Ascending aorta (tissue), 2 donors: ENCODE measurements at regions of chr1 and their contacts with region 1.

Region 1: GRCh38 chr1:9539165-9539828 is at the start of gene SLC25A33:
- DNase-seq: peak; percentile 88 to 98
- H3K4me3 ChIP-seq: peak within 1 kb of the TSS; percentile 59 to 90
- H3K27ac ChIP-seq: peak within 1 kb of the TSS; percentile 56 to 86
- H3K4me1 ChIP-seq: peaks cover 0 to 9% of the 10 kb centered on the region in 2 donors
- H3K27me3 ChIP-seq: no peaks in the 10 kb centered on the region
- CTCF ChIP-seq: peak in 1 of 3 experiments; percentile 53
- total RNA-seq, gene SLC25A33: 0.11 TPM

Region 2: DNA sequence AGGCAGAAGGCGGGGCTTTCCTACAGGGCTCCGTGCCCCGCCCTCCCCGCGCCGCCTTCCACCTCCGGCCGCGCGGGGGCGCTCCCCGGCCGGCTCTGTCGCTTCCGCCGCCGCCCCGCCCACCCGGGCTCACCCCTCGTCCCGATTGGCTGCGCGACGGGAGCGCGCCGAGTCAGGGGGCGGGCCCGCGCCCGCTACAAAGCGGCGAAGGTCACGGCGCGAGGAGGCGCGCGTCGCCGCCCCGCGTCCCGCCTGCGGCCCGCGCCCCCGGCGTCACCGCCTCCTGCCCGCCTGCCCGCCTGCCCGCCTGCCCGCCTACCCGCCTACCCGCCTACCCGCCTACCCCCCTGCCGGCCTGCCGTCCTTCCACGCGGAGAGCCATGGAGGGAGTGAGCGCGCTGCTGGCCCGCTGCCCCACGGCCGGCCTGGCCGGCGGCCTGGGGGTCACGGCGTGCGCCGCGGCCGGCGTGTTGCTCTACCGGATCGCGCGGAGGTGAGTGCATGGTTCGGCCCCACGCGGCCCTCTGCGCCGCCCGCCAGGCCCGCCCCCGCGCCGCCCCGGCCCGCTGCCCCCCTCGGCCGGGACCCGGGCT is 49.4 kb after region 1 on chr1 and contains the start of gene TMEM201:
- intact Hi-C with region 1: loop called (anchors 1 kb)
- DNase-seq: peak; percentile 56 to 96
- H3K4me3 ChIP-seq: peak within 1 kb of the TSS; percentile 77 to 91
- H3K27ac ChIP-seq: peak within 1 kb of the TSS in 1 of 2 donors; percentile 67
- H3K4me1 ChIP-seq: peaks cover 8 to 10% of the 10 kb centered on the region in 2 donors
- H3K27me3 ChIP-seq: no peaks in the 10 kb centered on the region
- CTCF ChIP-seq: peak in 2 of 3 experiments; percentile 63 to 80
- total RNA-seq, gene TMEM201: 12.8 TPM

Region 3: DNA sequence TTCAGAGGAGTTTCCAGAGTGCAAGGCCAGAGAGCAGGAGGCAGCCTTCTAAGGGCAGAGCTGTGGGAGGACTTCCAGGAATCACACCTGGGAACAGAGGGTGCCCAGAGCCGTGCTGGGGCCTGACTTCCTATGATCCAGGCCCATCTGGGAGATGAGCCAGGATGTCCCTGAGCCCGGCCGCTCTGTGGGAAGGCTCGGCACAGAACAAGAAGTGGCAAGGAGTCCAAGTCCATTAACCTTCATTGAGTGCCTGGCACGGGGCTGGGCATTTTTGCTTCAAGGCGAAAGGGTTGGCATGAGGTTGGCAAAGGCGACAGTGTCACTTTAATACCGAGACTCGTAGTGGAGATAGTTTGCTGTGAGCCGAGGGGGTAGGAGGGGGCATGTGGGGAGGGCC is 67.7 kb after region 1 on chr1:
- intact Hi-C with region 1: no loop called
- DNase-seq: no peak
- H3K4me3 ChIP-seq: no peak overlapping the region
- H3K27ac ChIP-seq: no peak overlapping the region
- H3K4me1 ChIP-seq: no peaks in the 10 kb centered on the region
- H3K27me3 ChIP-seq: no peaks in the 10 kb centered on the region
- CTCF ChIP-seq: no peak